ENCODE measurements at regions of chr18 and their contacts with region 1.

Region 1: GRCh38 chr18:2857491-2858131 is 10.8 kb downstream of the EMILIN2 start:
- DNase-seq: no peak
- CTCF ChIP-seq: no peak

Region 2: GRCh38 chr18:2971741-2972552 is 114.3 kb after region 1 on chr18:
- in situ Hi-C with region 1: loop called (anchors 25 kb)
- DNase-seq: peak; percentile 70
- CTCF ChIP-seq: no peak

Region 3: DNA sequence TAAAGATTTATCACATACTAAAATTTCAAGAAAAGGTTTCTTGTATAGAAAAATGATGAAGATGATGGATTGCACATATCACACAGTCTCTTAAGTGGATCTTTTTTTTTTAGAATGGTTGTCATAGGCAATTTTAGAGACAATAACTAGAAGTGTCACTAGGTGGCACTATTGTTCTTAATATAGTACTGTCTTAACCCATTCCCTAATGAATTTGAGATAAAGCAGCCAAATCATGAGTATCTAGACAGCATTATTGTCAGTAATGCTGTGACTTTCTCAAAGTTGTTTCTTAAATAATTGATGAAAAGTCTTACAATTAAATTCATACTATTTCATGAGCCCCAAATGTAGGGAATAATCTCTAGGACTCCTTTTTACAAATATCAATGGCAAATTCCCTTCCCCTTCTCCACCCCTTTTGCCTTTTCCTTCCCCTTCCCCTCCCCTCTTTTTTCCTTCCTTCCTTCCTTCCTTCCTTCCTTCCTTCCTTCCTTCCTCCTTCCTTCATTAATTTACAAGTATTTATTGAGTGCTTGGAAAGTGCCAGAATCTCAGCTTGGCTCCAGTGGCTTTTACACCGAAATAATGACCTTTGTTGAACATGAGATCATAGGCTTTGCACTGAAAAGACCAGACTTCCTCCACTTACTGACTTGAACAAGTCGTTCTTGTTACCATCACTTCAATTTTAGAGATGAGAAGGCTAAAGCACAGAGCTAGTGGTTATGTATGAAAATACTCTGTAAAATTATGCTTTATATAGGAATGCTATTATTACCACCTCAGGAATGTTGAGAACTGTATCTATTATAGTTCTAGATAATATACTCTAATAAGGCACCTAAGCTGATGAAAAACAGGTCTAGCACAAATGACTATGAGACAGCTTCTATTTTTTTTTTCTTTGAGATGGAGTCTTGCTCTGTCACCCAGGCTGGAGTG is 424.1 kb after region 1 on chr18:
- in situ Hi-C with region 1: no loop called
- DNase-seq: peak; percentile 62
- CTCF ChIP-seq: peak; percentile 48